ENCODE measurements at regions of chr16 and their contacts with region 1.

Region 1: DNA sequence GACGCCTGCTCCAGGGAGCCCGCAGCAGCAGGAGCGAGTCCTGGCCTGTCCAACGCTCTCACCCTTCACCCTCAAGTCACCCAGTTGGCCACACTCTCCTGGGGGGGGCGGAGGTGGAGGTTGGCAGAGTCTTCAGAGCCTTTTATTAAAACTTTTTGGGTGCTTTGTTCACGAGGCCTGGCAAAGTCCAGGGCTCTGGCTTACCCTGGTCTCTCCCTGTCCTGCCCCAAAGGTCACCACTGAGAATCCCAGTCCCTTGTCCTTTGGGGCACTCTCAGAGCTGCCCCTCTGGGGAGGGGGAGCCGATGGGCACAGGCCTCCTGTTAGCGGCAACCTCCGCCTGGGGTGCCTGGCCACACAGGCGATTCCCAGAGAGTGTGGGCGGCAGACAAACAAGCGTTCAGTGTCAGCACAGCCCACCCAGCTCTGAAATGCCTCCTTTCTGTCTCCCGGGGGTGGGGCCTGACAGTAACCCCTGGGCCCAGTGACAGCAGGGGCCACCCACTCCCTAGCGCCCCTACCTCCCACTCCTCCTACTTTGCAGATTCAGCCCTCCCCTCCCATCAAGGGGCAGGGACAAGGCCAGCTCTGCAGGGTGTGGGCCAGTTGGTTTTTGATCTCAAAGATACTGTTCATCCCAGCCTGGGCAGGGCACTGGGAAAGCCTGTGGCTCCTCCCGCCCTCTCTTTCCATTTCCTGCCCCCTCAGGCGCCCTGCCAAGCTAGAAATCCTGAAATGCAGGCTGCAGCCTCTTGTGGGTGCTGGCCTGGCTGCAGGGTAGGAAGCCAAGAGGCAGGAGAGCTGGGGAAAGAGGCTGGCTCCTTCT is 36.5 kb upstream of the EMP2 start:
- DNase-seq: peak; percentile 69 to 84 (median 76)
- ATAC-seq: peak; percentile 72 to 85 (median 82)
- H3K4me3 ChIP-seq: peak overlapping the region in 1 of 12 donors; percentile 3
- H3K27ac ChIP-seq: peak overlapping the region; percentile 9 to 86 (median 64)
- H3K4me1 ChIP-seq: peaks cover 3 to 38% (median 23%) of the 10 kb centered on the region in 12 donors
- H3K27me3 ChIP-seq: no peaks in the 10 kb centered on the region
- CTCF ChIP-seq: peak in 5 of 12 donors; percentile 19 to 35 (median 21)
- POLR2A ChIP-seq: no peak

Region 2: DNA sequence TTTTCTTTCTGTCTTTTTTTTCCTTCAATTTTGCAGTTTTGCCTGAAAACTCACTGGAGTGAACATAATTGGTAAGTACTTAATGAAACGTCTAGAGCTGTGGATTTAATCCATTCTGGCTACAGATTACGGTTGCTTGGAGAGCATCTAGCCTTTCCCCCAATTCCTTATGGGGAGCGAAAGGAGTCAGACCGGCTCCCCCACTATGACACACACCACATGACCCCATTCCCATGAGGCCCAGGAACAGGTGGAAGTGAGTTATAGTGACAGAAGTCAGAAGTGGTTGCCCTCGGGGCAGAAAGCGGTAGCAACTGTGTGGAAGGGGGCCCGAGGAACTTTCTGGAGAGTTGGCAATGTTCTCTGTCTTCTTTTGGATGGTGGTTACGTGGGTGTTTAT is 77.7 kb before region 1 on chr16:
- intact Hi-C with region 1: loop called in 1 of 10 experiments (anchors 5 kb)
- DNase-seq: no peak
- ATAC-seq: no peak
- H3K4me3 ChIP-seq: no peak overlapping the region
- H3K27ac ChIP-seq: no peak overlapping the region
- H3K4me1 ChIP-seq: peaks cover 0 to 6% (median 0%) of the 10 kb centered on the region in 12 donors
- H3K27me3 ChIP-seq: no peaks in the 10 kb centered on the region
- CTCF ChIP-seq: no peak
- POLR2A ChIP-seq: no peak

Region 3: DNA sequence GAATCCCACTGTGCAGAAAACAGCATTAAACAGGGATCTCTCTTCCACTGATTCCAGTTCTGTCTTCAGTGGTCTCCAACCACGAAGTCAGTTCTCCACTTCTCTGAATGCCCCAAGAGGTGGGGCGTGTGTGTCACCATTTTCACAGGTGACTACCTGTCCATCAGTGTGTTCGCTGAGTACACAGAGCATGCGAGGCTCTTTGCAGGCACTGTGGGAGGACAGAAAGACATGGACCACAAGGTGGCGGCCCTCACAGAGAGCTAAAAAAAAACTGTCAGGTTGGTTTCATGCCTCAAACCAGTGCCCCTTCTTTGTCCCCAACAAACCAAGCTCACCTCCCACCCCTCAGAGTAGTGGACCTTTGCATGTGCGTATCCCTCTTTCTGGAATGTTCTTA is 50.4 kb before region 1 on chr16:
- intact Hi-C with region 1: no loop called
- DNase-seq: no peak
- ATAC-seq: no peak
- H3K4me3 ChIP-seq: no peak overlapping the region
- H3K27ac ChIP-seq: peak overlapping the region in 2 of 12 donors; percentile 65 to 84
- H3K4me1 ChIP-seq: peaks cover 4 to 77% (median 57%) of the 10 kb centered on the region in 12 donors
- H3K27me3 ChIP-seq: no peaks in the 10 kb centered on the region
- CTCF ChIP-seq: no peak
- POLR2A ChIP-seq: no peak

Region 4: DNA sequence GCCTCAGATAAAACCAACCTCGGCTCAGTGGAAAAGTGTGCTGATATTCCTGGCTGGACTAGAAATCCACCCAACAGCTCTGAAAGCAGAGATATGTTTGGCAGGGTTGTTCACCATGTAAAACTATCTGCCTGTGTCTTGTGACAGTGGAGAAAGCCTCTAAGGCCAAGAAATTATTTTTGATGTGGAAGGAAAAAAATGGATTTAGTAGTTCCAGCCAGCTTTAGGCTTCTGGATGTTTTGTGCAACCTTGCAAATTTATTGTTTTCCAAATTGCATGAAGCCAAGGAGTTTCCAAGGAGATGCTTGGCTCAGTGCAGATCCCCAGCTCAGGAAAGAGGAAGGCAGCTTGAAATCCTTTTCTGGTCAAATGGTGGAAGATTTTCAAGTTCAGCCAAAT is 46.2 kb after region 1 on chr16:
- intact Hi-C with region 1: no loop called
- DNase-seq: no peak
- ATAC-seq: peak in 1 of 4 donors; percentile 22
- H3K4me3 ChIP-seq: no peak overlapping the region
- H3K27ac ChIP-seq: no peak overlapping the region
- H3K4me1 ChIP-seq: peaks cover 0 to 6% (median 0%) of the 10 kb centered on the region in 12 donors
- H3K27me3 ChIP-seq: no peaks in the 10 kb centered on the region
- CTCF ChIP-seq: no peak
- POLR2A ChIP-seq: no peak

Measured in heart left ventricle (tissue), 16 donors.